Cardiac septum (tissue), 1 donor: ENCODE measurements at regions of chr1 and their contacts with region 1.

Region 1: DNA sequence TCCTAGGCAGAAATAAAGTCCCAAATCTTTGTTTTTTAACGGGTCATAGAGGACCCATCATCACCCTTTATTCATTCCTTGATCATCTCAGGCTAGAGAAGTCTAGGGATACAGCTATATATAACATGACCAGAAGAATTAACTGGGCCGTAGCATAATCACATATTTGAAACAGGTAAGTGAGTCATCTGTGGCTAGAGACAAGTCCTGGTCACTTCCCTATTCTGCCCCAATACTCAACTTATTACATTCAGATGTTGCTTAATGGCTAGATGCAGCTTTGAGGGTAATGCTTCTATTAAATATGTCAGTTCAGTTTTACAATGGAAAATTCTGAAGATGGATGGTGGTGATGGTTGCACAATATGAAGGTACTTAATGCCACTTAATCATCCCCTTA is 47.0 kb downstream of the EXO1 start:
- DNase-seq: no peak

Region 2: DNA sequence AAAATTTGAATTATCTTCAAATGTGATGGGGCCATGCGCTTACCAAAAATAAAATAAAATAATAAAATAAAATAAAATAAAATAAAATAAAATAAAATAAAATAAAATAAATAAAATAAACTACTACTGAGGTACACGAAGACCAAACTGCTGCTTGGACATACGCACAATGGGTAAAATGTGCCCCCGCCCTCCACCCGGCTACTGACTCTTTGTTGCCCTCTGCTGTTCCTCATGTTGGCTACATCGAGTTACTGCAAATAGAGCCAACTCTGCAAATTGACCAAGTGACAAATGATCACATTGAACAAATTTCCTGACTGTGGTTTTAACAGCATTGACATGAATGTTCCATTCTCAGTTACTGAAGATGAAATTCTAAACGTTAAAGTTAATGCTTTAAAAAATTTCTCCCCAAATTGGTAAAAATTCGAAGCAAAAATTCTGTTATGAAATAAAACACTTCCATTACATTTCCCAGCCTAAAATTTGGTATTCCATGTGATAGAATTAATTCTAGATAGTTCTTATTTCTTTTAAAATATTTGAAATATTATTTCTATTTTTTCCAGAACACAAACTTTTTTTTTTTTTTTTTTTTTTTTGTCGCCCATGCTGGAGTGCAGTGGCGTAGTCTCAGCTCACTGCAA is 122.7 kb after region 1 on chr1:
- intact Hi-C with region 1: loop called (anchors 5 kb)
- DNase-seq: peak; percentile 53